GM10248 (cell line): ENCODE measurements at regions of chr3 and their contacts with region 1.

Region 1: GRCh38 chr3:184513276-184514170 is 48.1 kb upstream of the EPHB3 start:
- DNase-seq: peak; percentile 92
- CTCF ChIP-seq: peak; percentile 75

Region 2: DNA sequence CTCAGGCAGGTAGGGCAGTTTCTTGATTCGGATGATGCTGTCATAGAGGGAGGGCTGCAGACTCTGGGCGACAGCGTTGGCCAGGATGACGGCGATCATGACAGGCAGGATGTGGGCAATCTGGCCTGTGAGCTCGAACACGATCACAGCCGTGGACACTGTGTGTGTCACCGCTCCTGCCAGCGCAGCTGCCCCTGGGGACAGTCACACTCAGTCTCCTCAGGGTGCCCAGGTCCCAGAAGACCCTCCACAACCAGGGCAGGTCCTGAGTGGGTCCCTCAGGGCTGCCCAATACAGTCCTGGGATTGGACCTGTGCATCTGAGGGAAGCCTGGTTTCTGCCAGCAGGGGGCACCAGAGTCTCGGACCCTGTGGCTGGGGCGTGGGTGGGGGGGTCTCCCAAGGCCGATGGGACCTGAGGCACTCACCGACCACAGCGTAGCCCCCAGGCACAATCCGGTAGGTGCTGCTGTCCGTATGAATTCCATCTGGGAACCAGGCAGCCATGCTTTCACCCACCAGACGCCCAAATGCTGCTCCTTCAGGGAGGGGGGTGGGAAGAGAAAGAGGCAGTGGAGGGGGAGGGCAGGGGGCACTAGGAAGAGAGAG is 159.3 kb before region 1 on chr3:
- CTCF ChIA-PET with region 1: interaction called, 31 read pairs
- POLR2A ChIA-PET with region 1: no interaction called
- DNase-seq: peak; percentile 84
- CTCF ChIP-seq: peak; percentile 87

Region 3: DNA sequence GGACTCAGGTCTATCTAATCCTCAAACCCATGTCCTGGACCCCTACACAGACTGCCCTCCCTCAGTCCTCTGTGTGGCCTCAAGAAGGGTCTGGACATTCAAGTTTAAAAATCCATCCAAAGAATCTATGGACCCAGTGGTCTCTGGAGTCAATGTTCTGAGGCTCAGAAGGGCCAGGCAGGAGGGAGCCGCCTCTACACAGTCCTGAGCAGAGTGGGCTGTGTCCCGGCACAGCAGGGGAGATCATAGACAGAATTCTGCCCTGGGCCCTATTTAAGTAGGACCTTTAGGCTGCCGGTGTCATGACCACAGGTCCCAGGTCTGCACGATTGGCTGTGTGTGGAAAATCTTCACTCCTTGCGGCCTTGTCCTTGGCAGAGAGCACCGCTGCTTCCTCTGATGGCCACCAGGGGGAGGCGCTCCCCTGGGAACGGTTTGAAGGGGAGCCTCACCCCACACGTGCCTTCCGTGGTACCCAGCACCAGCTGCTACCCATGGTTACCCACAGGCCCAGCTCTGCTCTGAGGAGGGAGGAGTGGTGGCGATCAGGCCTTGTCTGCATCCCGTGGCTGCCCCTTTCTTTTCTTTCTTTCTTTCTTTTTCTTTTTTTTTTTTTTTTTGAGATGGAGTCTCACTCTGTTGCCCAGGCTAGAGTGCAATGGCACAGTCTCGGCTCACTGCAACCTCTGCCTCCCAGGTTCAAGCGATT is 95.8 kb before region 1 on chr3:
- CTCF ChIA-PET with region 1: interaction called, 18 read pairs
- POLR2A ChIA-PET with region 1: no interaction called
- DNase-seq: peak; percentile 83
- CTCF ChIP-seq: peak; percentile 86

Region 4: DNA sequence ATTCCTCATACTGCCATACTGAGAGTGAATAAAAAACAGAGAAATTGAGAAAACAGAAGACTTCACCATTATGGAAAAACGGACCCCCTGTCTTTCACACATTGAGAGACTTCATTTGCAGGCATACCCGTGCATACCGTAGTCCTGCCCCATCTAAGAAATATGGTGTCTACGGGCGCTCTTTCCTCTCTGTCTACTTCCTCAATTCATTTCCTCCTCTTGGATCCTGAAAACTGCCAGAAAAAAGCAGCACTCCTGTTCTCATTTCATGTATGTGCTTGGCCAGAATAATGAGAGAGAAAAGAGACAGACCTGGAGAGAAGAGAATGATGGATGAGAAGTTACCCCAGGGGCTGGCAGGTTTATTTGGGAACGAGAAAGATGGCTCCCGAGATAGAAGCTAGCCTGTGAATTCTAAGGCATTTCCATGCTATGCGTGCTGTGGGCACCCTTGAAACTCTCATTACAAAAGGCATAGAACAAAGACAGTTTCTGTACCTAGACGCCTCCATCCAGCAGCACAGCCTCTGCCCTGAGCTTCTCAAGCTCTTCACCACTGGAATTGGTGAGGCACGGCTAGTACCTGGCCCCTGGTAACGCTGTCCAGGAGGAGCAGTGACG is 14.4 kb before region 1 on chr3:
- CTCF ChIA-PET with region 1: interaction called, 24 read pairs
- POLR2A ChIA-PET with region 1: no interaction called
- DNase-seq: no peak
- CTCF ChIP-seq: no peak

Region 5: DNA sequence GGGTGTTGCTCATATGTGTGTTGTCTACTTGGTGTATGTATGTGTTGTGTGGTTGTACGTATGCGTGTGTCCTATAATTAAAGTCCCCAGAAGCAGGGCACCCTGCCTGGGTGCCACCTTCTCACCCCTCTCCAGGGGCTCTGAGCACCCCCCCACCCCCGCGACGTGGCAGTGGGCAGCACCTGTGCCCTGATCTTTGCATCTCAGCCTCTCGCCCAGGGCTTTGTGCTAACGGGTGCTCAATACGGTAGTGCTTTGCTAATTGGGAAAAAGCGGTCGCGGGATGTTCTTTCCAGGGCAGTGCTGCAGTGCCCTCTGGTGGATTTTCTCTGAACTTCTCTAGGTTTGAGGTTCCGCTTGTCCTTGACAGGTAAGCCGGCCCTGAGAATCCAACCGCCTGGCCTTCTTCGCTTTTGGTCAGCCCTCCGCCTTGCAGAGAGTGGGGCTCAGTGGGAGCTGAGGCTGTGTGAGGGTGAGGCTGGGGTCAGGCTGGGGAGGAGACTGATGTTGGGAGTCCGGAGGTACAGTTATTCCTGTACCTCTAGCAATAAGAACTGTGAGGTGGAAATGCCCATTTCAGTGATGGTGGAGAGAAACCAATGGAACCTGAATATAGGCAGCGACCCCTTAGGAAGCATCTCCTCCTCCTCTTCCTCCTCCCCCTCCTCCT is 30.5 kb after region 1 on chr3:
- CTCF ChIA-PET with region 1: interaction called, 25 read pairs
- POLR2A ChIA-PET with region 1: no interaction called
- DNase-seq: peak; percentile 83
- CTCF ChIP-seq: peak; percentile 72

Region 6: DNA sequence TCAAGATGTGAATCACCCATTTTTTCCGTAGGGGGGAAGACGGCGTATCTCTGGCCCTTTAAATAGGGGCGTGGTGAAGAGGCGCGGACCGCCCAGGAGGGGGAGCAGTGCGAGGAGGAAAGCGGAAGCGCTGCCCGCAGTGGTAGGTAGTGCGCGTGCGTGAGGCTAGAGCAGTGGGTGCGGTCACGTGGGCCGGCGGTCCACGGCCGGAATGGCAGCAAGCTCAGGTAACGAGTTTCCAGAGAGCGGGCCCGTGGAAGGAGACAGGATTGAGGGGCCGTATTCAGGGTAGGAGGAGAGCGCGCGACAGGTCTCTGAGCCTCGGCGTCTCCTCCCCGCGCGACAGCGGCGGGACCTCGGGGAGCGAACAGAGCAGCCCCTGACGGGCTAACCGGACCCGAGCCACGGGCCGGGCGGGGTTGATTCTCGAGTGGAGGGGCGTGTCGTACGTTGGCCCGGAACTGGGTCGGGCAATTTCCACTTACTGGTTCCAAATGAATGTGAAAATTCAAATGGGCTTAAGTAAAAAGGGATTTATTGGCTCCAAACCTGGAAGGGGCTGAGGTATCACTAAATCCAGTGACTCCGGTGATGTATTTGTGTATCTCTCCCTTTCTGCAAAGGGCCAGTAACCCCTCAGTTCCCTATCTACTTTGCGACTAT is 298.6 kb after region 1 on chr3 and contains the start of gene VPS8:
- CTCF ChIA-PET with region 1: no interaction called
- POLR2A ChIA-PET with region 1: no interaction called
- DNase-seq: peak; percentile 96
- CTCF ChIP-seq: peak; percentile 33

Region 7: GRCh38 chr3:184842433-184842832 is 328.9 kb after region 1 on chr3:
- CTCF ChIA-PET with region 1: no interaction called
- POLR2A ChIA-PET with region 1: no interaction called
- DNase-seq: no peak
- CTCF ChIP-seq: no peak